Mammary epithelial cell (primary cell): ENCODE measurements at regions of chr9 and their contacts with region 1.

Region 1: GRCh38 chr9:71368157-71368556 is 246.7 kb upstream of the TRPM3 start:
- DNase-seq: no peak
- H3K4me3 ChIP-seq: no peak overlapping the region
- H3K27ac ChIP-seq: no peak overlapping the region
- H3K4me1 ChIP-seq: no peaks in the 10 kb centered on the region
- H3K27me3 ChIP-seq: no peaks in the 10 kb centered on the region
- CTCF ChIP-seq: no peak

Region 2: GRCh38 chr9:71279151-71279739 is 88.9 kb before region 1 on chr9:
- CTCF ChIA-PET with region 1: no interaction called
- dilution Hi-C with region 1: no loop called
- in situ Hi-C with region 1: no loop called
- intact Hi-C with region 1: no loop called
- DNase-seq: no peak
- H3K4me3 ChIP-seq: no peak overlapping the region
- H3K27ac ChIP-seq: no peak overlapping the region
- H3K4me1 ChIP-seq: no peaks in the 10 kb centered on the region
- H3K27me3 ChIP-seq: no peaks in the 10 kb centered on the region
- CTCF ChIP-seq: no peak

Region 3: DNA sequence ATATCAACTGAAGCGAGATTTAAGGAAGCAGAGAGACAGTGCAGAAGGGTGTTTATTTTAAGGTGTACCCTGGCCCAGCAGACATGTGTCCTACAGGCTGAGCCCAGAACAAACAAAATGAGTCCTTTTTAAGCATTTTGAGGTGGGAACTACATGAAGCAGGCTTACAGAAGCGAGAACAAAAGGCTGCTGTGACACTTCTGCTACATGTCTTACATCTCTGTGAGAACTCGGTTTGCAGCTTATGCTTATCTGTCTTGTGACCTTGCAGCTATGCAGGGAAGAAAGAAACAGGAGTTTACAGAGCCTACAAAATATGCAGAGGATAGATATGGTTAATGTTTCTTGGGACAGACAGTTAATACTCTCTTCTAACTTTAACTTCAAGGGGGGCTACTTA is 104.2 kb after region 1 on chr9:
- CTCF ChIA-PET with region 1: no interaction called
- dilution Hi-C with region 1: loop called (anchors 5 kb)
- in situ Hi-C with region 1: no loop called
- intact Hi-C with region 1: no loop called
- DNase-seq: no peak
- H3K4me3 ChIP-seq: no peak overlapping the region
- H3K27ac ChIP-seq: no peak overlapping the region
- H3K4me1 ChIP-seq: no peaks in the 10 kb centered on the region
- H3K27me3 ChIP-seq: no peaks in the 10 kb centered on the region
- CTCF ChIP-seq: no peak

Region 4: DNA sequence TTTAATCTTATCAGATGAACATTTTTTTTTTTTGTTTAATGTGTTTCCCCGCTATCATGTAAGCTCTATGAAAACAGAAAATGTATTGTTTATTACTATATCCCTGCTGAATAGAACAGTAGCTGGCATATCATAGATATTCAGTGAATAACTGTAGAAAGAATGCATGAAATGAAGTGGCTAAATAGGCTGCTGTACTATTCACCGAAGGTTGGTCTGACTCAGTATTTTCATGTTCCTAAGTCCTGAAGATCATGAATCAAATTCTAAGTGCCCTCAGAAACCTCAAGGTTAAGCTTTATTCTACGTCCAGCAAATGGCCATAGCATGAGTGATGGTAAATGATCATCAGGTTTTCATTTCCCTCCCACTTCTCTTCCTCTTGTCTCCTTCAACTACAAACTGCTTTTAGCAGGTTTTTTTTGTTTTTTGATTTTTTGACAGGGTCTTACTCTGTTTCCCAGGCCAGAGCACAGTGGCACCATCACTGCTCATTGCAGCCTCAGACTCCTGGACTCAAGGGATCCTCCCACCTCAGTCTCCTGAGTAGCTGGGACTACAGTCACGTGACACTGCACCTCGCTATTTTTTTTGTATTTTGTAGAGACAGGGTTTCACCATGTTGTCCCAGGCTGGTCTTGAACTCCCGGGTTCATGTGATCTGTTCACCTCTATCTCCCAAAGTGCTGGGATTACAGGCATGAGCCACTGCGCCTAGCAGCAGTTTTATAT is 1016.0 kb after region 1 on chr9:
- CTCF ChIA-PET with region 1: no interaction called
- dilution Hi-C with region 1: no loop called
- in situ Hi-C with region 1: no loop called
- intact Hi-C with region 1: no loop called
- DNase-seq: peak; percentile 87
- H3K4me3 ChIP-seq: no peak overlapping the region
- H3K27ac ChIP-seq: peak overlapping the region; percentile 17
- H3K4me1 ChIP-seq: peaks cover 7% of the 10 kb centered on the region
- H3K27me3 ChIP-seq: no peaks in the 10 kb centered on the region
- CTCF ChIP-seq: no peak